GM23248 (cell line): ENCODE measurements at regions of chr3 and their contacts with region 1.

Region 1: DNA sequence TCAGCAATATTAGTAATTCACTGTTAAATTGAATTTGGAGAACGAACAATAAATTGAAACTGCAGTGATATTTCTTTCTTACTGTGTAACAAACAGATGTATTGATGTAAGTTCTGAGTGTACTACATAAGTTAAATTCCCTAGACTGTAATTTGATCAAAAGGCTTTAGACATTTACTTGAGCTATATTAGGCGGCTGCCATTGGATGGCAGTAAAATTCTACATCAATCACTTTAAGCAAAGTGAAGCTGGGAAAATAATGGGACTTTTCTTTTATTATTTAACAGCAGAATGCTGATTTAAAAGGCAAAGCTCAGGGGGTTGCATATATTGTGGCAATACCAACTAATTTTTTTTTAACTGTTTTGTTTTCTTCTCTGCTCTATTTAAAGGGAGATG is 212.6 kb upstream of the PLSCR5 start:
- DNase-seq: peak; percentile 72
- H3K4me3 ChIP-seq: no peak overlapping the region
- H3K27ac ChIP-seq: no peak overlapping the region
- H3K4me1 ChIP-seq: peaks cover 47% of the 10 kb centered on the region
- H3K27me3 ChIP-seq: no peaks in the 10 kb centered on the region

Region 2: GRCh38 chr3:145857956-145858355 is 959.7 kb before region 1 on chr3:
- in situ Hi-C with region 1: no loop called
- DNase-seq: no peak
- H3K4me3 ChIP-seq: no peak overlapping the region
- H3K27ac ChIP-seq: no peak overlapping the region
- H3K4me1 ChIP-seq: no peaks in the 10 kb centered on the region
- H3K27me3 ChIP-seq: no peaks in the 10 kb centered on the region

Region 3: GRCh38 chr3:146148468-146148931 is 669.2 kb before region 1 on chr3:
- in situ Hi-C with region 1: no loop called
- DNase-seq: peak; percentile 56
- H3K4me3 ChIP-seq: no peak overlapping the region
- H3K27ac ChIP-seq: peak overlapping the region; percentile 19; the same call in 1 of the 2 replicates
- H3K4me1 ChIP-seq: peaks cover 31% of the 10 kb centered on the region; the same call in 1 of the 2 replicates
- H3K27me3 ChIP-seq: no peaks in the 10 kb centered on the region

Region 4: DNA sequence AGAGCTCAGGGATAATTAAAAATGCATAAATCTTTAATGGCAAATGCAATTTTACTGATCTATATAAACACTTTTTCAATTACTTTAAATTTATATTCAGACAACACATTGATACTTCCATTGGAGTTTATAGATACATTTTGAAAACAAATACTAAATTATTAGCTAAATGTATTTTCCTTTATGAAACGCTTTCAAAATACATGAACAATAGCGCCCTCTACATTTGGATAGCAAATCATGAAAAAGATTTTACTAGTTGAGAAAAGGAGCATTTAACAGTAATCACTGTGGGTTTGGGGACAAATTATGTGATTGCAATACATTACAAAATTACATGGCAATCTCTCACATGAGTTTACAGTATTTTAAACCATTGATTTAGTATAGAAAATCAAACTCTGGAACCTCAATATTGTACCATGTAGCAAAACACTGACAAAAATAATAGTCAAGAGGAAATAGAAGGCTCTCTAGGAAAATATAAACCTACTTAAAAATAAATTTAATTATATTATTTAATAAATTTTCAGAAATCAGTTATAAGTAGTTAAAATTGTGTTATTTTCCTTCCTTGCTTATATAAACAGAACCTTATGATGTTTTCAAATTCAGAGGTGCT is 799.4 kb after region 1 on chr3:
- in situ Hi-C with region 1: loop called (anchors 25 kb)
- DNase-seq: peak; percentile 69
- H3K4me3 ChIP-seq: no peak overlapping the region
- H3K27ac ChIP-seq: no peak overlapping the region
- H3K4me1 ChIP-seq: peaks cover 15% of the 10 kb centered on the region
- H3K27me3 ChIP-seq: no peaks in the 10 kb centered on the region